ENCODE measurements at regions of chr10 and their contacts with region 1.

Region 1: DNA sequence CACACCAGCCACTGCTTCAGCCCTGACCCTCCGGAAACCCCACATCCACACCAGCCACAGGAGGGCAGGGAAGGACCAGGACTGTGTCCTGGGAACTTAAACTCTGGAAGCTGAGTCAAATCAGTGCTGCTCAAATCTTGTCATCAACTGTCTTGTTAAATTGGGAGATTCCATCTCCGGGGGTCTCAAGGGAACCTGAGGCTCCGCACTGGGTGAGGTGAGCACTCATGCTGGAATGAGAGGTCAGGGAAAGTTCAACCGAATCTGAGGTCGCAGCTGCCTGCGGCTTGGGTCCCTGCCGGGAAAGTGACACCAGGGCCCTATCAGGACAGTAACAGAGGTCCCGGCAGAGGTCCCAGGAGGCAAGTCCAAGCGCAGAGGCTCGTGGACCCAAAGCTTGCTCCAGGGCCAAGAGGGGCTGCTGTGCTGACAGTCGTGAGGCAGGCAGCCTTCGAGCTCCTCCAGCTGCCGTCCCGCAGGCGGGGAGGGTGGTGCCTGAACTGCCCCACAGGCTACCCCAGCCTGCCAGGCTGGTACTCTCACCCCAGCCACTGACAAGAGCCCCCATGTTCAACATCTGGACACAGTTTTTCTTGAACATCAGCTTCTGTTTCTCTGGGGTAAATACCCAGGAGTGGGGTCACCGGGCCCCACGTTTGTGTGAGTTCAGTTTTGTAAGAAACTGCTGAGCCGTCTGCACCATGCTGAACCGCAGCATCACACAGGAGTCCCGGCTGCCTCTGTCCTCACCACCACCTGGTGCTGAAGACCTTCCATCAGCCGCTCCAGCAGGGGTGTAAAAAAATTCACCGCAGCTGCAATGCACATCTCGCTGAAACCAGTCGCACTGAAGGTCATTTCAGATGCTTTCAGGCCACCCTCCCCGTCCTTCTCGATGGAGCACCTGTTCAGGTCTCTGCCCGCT is 101.0 kb downstream of the DIP2C start:
- DNase-seq: peak; percentile 69
- ATAC-seq: peak; percentile 80
- H3K4me3 ChIP-seq: no peak overlapping the region
- H3K27ac ChIP-seq: no peak overlapping the region
- H3K4me1 ChIP-seq: peaks cover 11% of the 10 kb centered on the region
- H3K27me3 ChIP-seq: no peaks in the 10 kb centered on the region
- CTCF ChIP-seq: peak; percentile 57
- POLR2A ChIP-seq: no peak
- RAD21 ChIP-seq: peak; percentile 78

Region 2: DNA sequence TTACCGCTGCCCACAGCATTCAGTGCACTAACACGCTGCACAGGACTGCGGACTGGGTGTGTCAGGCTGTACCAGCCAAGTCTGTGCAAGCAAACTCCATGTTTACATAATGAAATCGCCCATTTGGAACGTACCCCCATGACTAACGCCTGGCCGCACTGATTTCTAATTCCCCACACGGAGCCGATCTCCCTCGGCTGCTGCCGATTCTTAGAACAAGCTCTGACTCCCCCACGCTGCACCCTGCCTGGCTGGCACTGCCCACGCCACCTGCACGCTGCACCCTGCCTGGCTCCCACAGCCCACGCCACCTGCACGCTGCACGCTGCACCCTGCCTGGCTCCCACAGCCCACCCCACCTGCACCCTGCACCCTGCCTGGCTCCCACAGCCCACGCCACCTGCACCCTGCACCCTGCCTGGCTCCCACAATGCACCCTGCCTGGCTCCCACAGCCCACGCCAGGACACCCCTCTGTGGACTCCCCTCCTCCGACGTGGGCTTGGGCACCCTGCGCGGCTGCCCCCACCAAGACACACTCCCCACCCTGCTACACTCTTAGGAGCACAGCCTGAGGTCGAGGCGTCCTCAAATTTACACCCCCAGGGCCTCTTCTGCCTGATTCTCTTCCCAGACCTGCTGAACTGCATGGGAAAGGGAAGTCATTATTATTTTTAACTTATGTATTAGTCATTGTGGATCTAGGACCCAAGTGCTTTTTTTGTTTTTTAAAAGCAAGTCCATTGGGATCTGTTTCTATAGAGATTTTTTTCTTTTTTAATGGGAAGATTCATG is 249.8 kb before region 1 on chr10:
- CTCF ChIA-PET with region 1: no interaction called
- POLR2A ChIA-PET with region 1: no interaction called
- dilution Hi-C with region 1: no loop called
- in situ Hi-C with region 1: no loop called
- intact Hi-C with region 1: no loop called
- DNase-seq: peak; percentile 16
- ATAC-seq: peak; percentile 60
- H3K4me3 ChIP-seq: no peak overlapping the region
- H3K27ac ChIP-seq: no peak overlapping the region
- H3K4me1 ChIP-seq: no peaks in the 10 kb centered on the region; the same call in 1 of the 2 replicates
- H3K27me3 ChIP-seq: no peaks in the 10 kb centered on the region
- CTCF ChIP-seq: no peak
- POLR2A ChIP-seq: no peak
- RAD21 ChIP-seq: no peak

Region 3: GRCh38 chr10:784403-785088 is 196.0 kb after region 1 on chr10:
- CTCF ChIA-PET with region 1: no interaction called
- POLR2A ChIA-PET with region 1: no interaction called
- dilution Hi-C with region 1: no loop called
- in situ Hi-C with region 1: no loop called
- intact Hi-C with region 1: loop called (anchors 2 kb)
- DNase-seq: peak; percentile 88
- ATAC-seq: peak; percentile 87
- H3K4me3 ChIP-seq: peak overlapping the region; percentile 51
- H3K27ac ChIP-seq: peak overlapping the region; percentile 34; the same call in 1 of the 2 replicates
- H3K4me1 ChIP-seq: peaks cover 5% of the 10 kb centered on the region
- H3K27me3 ChIP-seq: no peaks in the 10 kb centered on the region
- CTCF ChIP-seq: peak; percentile 43
- POLR2A ChIP-seq: 0 out of 2 replicates have a peak, but pooled peaks have one; percentile 39
- RAD21 ChIP-seq: peak; percentile 57

Region 4: DNA sequence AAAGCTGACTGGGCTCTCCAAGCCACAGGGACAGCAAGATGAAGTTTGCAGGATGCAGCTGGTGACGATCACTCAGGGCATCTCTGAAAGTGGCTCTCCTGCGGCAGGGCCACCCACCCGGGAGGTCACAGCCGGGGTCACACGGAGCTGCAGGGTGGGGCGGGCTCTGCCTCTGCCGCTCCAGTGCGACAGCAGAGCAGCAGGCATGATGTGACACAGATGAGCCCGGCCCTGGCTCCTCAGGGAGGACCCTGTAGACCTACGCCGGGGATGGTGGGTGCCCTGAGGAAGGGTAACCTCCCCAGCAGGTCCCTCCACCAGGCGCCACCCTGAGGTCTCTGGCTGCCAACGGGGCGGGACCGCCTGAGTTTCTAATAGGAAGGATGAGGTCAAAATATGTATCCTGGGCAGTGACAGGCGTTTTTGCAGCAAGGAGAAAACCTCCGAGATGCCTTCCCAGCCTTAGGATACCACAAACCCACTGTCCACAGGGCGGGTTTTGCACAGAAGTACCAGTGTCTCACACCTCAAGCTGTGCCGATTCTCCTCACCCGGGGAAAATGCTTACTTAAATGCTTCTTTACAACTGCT is 215.8 kb after region 1 on chr10:
- CTCF ChIA-PET with region 1: no interaction called
- POLR2A ChIA-PET with region 1: no interaction called
- dilution Hi-C with region 1: no loop called
- in situ Hi-C with region 1: loop called (anchors 10 kb)
- intact Hi-C with region 1: no loop called
- DNase-seq: peak; percentile 13
- ATAC-seq: peak; percentile 39
- H3K4me3 ChIP-seq: no peak overlapping the region
- H3K27ac ChIP-seq: no peak overlapping the region
- H3K4me1 ChIP-seq: peaks cover 5% of the 10 kb centered on the region
- H3K27me3 ChIP-seq: no peaks in the 10 kb centered on the region
- CTCF ChIP-seq: no peak
- POLR2A ChIP-seq: no peak
- RAD21 ChIP-seq: no peak